ENCODE measurements at regions of chr4 and their contacts with region 1.

Region 1: GRCh38 chr4:101299021-101299420 is 48.3 kb downstream of the PPP3CA start:
- DNase-seq: no peak
- ATAC-seq: no peak
- H3K4me3 ChIP-seq: no peak overlapping the region
- H3K4me3 Mint-ChIP-seq: no peak overlapping the region
- H3K27ac ChIP-seq: no peak overlapping the region
- H3K27ac Mint-ChIP-seq: no peak overlapping the region
- H3K4me1 ChIP-seq: peaks cover 0 to 3% of the 10 kb centered on the region in 2 experiments
- H3K4me1 Mint-ChIP-seq: peaks cover 17 to 36% (median 20%) of the 10 kb centered on the region in 3 donors
- H3K27me3 ChIP-seq: no peaks in the 10 kb centered on the region
- H3K27me3 Mint-ChIP-seq: no peaks in the 10 kb centered on the region

Region 2: GRCh38 chr4:101025755-101026154 is 273.3 kb before region 1 on chr4:
- CTCF ChIA-PET with region 1: interaction called in 1 of 2 experiments, 13 read pairs
- POLR2A ChIA-PET with region 1: no interaction called
- DNase-seq: no peak
- ATAC-seq: no peak
- H3K4me3 ChIP-seq: no peak overlapping the region
- H3K4me3 Mint-ChIP-seq: peak overlapping the region in 1 of 3 donors; percentile 13
- H3K27ac ChIP-seq: no peak overlapping the region
- H3K27ac Mint-ChIP-seq: peak overlapping the region in 1 of 2 donors; percentile 22
- H3K4me1 ChIP-seq: peaks cover 3 to 4% of the 10 kb centered on the region in 2 experiments
- H3K4me1 Mint-ChIP-seq: peaks cover 7 to 39% (median 34%) of the 10 kb centered on the region in 3 donors
- H3K27me3 ChIP-seq: no peaks in the 10 kb centered on the region
- H3K27me3 Mint-ChIP-seq: no peaks in the 10 kb centered on the region